Mucosa of descending colon (tissue), 3 donors: ENCODE measurements at regions of chr3 and their contacts with region 1.

Region 1: DNA sequence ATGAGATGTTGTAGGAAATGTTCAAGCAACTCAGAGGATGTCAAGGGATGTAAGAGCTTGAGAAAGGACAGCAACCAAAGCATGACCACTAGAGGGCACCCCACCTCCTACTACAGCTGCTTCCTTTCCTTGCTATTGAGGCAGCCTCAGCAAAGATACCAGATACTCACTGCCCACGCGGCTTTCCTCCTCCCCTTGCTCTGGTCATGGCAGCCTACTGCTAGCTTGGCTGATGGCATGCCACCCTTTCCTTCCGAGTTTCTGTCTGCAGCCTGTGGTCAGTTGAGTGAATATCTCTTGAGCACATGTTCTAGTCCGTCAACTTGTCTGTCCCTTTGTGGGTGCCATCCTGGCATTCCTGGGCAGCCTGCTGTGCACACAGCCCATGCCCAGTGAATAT is 4.4 kb upstream of the CXCR6 start:
- DNase-seq: peak; percentile 65 to 97 (median 69)
- ATAC-seq: peak; percentile 91
- H3K4me3 ChIP-seq: no peak overlapping the region
- H3K4me1 ChIP-seq: peaks cover 12% of the 10 kb centered on the region
- CTCF ChIP-seq: peak; percentile 80

Region 2: DNA sequence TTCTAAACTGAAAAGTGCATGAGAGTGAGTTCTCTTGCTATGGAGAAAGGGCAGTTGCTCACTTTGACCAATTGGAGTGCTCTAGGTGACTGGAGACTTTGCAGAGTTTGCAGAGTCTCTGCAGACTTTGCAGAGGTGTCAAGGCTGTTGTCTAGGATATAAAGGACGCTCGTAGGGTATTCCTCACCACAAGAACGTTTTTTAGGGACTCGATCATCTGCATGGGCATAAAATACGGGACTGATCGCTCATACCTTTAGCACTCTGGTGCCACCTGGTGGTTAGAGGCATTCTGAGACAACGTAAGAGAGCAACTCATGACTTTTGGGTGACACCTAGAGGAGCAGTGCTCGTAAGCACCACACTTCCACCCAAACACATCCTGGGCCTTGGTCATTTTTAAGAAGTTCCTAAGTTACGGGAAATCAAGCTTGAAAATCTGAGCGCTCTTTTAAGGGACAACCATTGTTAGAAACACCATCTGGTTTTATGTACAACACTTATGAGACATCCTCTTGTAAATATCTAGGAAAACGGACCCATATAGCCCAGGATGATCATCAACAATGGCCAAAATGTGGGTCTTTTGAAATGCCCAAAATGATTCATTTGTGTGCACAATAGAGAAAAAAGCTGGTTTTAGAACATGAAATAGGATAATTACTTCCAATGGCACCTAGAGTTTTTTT is 140.0 kb after region 1 on chr3:
- intact Hi-C with region 1: loop called (anchors 2 to 5 kb)
- DNase-seq: peak in 2 of 3 donors; percentile 67 to 100
- ATAC-seq: peak; percentile 100
- H3K4me3 ChIP-seq: no peak overlapping the region
- H3K4me1 ChIP-seq: no peaks in the 10 kb centered on the region
- CTCF ChIP-seq: peak; percentile 81

Region 3: DNA sequence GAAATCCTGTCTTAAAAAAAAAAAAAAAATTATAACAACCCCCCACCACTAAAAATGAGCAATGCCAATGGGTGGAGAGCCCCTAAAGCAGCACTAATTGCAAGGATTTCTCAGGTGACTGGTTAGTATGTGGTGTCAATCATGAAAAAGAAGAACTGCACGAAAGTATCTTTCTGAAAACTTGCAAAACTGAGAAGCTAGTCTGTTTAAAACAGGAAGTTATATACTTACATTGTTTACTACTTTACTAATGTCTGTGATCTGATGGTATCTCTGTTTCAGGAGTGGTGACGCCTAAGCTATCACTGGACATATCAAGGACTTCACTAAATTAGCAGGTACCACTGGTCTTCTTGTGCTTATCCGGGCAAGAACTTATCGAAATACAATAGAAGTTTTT is 303.3 kb after region 1 on chr3 and contains the start of gene CCR3:
- intact Hi-C with region 1: no loop called
- DNase-seq: no peak
- ATAC-seq: no peak
- H3K4me3 ChIP-seq: no peak within 1 kb of the TSS
- H3K4me1 ChIP-seq: no peaks in the 10 kb centered on the region
- CTCF ChIP-seq: no peak
- total RNA-seq, gene CCR3: 0.67 TPM in 1 of 3 donors, not detected in the others

Region 4: DNA sequence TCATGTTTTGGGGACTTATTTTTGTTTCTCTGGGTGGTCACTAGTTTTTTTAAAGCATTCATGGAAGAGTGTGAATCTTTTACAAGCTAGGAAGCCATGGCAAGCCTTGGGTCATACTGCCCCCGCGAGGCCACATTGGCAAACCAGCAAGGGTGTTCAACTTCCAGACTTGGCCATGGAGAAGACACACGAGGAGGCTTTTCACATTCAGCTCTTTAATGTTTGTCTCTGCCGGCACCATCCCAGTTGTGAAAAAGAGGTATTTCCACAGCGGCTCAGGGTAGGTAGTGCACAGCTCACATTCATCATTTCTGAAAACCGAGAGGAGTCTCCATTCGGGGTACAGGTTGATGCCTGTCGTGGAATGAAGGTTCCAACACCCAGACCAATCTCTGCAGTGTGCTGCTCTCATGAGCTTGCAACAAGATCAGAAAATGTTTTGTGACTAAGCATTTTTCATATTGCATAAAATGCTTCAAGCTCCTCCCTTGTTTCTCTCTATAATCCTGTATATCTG is 439.6 kb after region 1 on chr3:
- intact Hi-C with region 1: loop called in 1 of 2 experiments (anchors 10 kb)
- DNase-seq: peak; percentile 74 to 84 (median 82)
- ATAC-seq: peak; percentile 72
- H3K4me3 ChIP-seq: no peak overlapping the region
- H3K4me1 ChIP-seq: peaks cover 9% of the 10 kb centered on the region
- CTCF ChIP-seq: peak; percentile 51